ENCODE measurements at regions of chr15 and their contacts with region 1.

Region 1: DNA sequence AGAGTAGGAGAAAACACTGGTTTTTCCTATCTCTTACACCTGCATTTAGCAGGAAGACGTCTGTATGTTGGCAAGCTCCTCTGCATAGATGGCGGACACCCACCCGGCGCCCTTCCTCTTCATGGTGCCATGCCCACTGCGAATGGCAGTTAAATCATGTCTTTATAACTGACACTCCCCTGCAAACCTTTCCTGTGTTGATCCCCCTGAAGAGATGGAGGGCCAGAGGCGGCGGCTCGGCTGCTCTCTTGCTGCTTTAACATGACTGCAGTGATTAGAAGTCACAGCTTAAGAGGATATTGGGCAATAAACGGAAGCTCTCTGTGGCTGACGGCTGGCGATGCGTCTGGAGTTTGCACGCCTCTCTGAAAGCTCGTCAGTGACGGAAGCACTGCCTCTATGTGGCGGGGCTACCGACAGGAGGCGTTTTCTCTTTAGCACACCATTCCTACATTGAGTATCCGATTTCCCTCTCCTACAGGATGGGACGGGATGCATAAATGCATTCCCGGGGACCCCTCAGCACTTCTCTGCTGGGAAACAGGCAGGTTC is 25.5 kb upstream of the SNRPA1 start:
- DNase-seq: peak; percentile 89
- H3K4me3 Mint-ChIP-seq: peak overlapping the region; percentile 80
- H3K27ac Mint-ChIP-seq: peak overlapping the region; percentile 74
- H3K4me1 Mint-ChIP-seq: peaks cover 10% of the 10 kb centered on the region
- H3K27me3 Mint-ChIP-seq: no peaks in the 10 kb centered on the region

Region 2: GRCh38 chr15:100849252-100850171 is 471.1 kb before region 1 on chr15:
- CTCF ChIA-PET with region 1: no interaction called
- intact Hi-C with region 1: no loop called
- DNase-seq: peak; percentile 59
- H3K4me3 Mint-ChIP-seq: peak overlapping the region; percentile 74
- H3K27ac Mint-ChIP-seq: no peak overlapping the region
- H3K4me1 Mint-ChIP-seq: peaks cover 6% of the 10 kb centered on the region
- H3K27me3 Mint-ChIP-seq: peaks cover 9% of the 10 kb centered on the region

Region 3: GRCh38 chr15:101078682-101079323 is 241.8 kb before region 1 on chr15:
- CTCF ChIA-PET with region 1: no interaction called
- intact Hi-C with region 1: no loop called
- DNase-seq: no peak
- H3K4me3 Mint-ChIP-seq: no peak overlapping the region
- H3K27ac Mint-ChIP-seq: no peak overlapping the region
- H3K4me1 Mint-ChIP-seq: no peaks in the 10 kb centered on the region
- H3K27me3 Mint-ChIP-seq: no peaks in the 10 kb centered on the region

Region 4: DNA sequence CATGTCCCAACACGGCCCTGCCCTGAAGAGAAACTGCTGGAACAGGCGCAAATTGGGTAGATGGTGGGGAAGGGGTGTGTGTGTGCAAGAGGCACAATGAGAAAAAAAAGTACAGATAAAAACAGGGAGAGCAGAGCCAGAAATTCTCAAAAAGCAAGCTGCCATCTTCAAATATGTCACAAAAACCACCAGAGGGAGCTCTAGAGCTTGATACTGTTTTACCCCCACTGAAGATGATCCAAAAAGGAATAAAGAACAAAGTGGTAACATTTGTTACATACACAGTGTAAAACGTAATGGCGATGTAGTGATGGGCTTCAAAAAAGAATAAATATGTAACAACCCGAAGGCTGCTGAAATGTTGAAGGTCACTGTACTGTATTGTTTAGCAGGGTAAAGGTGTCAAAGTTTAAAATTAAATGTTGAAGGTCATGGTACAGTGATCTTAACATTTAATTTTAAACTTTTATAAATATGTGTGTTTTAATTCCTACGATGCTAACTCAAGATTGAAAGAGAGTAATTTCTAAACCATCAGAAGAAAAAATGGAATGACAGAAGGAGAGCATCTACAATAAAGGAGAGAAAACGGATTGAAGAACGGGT is 31.6 kb before region 1 on chr15:
- CTCF ChIA-PET with region 1: interaction called, 17 read pairs
- intact Hi-C with region 1: loop called (anchors 1 kb)
- DNase-seq: no peak
- H3K4me3 Mint-ChIP-seq: no peak overlapping the region
- H3K27ac Mint-ChIP-seq: peak overlapping the region; percentile 29
- H3K4me1 Mint-ChIP-seq: peaks cover 56% of the 10 kb centered on the region
- H3K27me3 Mint-ChIP-seq: no peaks in the 10 kb centered on the region

Region 5: GRCh38 chr15:101333401-101333800 is 12.8 kb after region 1 on chr15:
- CTCF ChIA-PET with region 1: interaction called, 5 read pairs
- intact Hi-C with region 1: loop called (anchors 1 kb)
- DNase-seq: no peak
- H3K4me3 Mint-ChIP-seq: no peak overlapping the region
- H3K27ac Mint-ChIP-seq: peak overlapping the region; percentile 27
- H3K4me1 Mint-ChIP-seq: peaks cover 11% of the 10 kb centered on the region
- H3K27me3 Mint-ChIP-seq: no peaks in the 10 kb centered on the region

Region 6: DNA sequence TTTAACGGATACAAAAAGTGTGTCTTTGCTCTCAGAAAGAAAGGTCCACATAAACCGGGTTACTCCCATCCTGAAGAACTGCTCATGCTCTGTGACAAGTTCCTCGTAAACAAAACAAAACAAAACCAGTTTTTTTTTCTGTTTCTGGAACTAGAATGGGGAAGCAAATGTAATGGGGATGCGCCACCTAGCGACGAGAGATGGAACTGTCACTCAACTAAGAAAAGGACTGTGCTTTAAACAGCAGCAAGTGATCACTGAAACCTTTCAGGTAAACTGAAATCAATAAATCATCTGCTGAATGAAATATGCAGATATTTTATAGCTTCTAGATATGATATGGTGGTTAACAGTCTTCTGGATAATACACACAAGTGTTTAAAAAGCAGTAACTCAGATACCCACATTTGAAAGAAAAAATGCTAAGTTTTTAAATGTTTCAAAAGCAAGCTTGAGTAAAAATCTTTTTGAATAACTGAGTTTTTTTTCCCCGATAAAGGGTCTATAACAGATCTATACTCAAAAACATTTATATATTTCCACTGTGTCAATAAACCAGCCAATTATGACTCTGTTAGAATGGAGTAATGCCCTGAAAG is 320.7 kb after region 1 on chr15:
- CTCF ChIA-PET with region 1: interaction called, 7 read pairs
- intact Hi-C with region 1: loop called (anchors 1 kb)
- DNase-seq: peak; percentile 86
- H3K4me3 Mint-ChIP-seq: no peak overlapping the region
- H3K27ac Mint-ChIP-seq: peak overlapping the region; percentile 59
- H3K4me1 Mint-ChIP-seq: peaks cover 30% of the 10 kb centered on the region
- H3K27me3 Mint-ChIP-seq: no peaks in the 10 kb centered on the region

Measured in activated naive CD4-positive, alpha-beta T cell treated with anti-CD3 and anti-CD28 coated beads for 36 hours (primary cell).